ENCODE measurements at regions of chr5 and their contacts with region 1.

Region 1: GRCh38 chr5:126676195-126676624 is 75.5 kb downstream of the PHAX start:
- DNase-seq: peak; percentile 84
- CTCF ChIP-seq: peak; percentile 67

Region 2: DNA sequence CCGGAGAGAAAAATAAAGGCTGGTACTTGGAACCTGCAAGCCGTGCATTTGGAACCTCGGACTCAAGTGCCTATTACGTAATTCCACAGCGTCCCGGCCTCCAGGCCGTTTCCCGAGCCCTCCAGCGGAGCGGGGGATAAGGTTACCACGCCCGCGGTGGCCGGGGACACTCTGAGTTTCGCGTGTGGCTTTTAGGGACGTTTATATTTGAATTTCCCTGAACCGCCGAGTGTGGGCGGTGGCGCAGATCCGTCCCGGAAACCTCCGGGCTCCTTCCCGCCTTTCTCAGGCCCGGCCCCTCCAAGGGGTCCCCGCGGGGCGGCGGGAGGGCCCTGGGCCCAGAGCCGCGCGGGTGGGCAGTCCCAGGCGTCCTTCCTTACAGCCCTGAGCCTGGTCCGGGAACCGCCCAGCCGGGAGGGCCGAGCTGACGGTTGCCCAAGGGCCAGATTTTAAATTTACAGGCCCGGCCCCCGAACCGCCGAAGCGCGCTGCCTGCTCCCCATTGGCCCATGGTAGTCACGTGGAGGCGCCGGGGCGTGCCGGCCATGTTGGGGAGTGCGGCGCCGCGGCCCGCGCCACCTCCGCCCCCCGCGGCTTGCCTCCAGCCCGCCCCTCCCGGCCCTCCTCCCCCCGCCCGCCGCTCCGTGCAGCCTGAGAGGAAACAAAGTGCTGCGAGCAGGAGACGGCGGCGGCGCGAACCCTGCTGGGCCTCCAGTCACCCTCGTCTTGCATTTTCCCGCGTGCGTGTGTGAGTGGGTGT is 100.5 kb after region 1 on chr5 and contains the start of gene LMNB1:
- in situ Hi-C with region 1: loop called (anchors 5 kb)
- DNase-seq: peak; percentile 93
- CTCF ChIP-seq: no peak

Measured in GM13977 (cell line).